RWPE1 (cell line): ENCODE measurements at regions of chr4 and their contacts with region 1.

Region 1: GRCh38 chr4:186021461-186022167 is 47.3 kb upstream of the TLR3 start:
- DNase-seq: peak; percentile 43
- H3K27ac ChIP-seq: no peak overlapping the region
- CTCF ChIP-seq: peak; percentile 87

Region 2: GRCh38 chr4:185640811-185641675 is 380.6 kb before region 1 on chr4:
- CTCF ChIA-PET with region 1: interaction called, 25 read pairs
- POLR2A ChIA-PET with region 1: no interaction called
- DNase-seq: peak; percentile 19
- H3K27ac ChIP-seq: no peak overlapping the region
- CTCF ChIP-seq: peak; percentile 42

Region 3: GRCh38 chr4:186037692-186038658 is 16.4 kb after region 1 on chr4:
- CTCF ChIA-PET with region 1: interaction called, 12 read pairs
- POLR2A ChIA-PET with region 1: no interaction called
- DNase-seq: peak; percentile 62
- H3K27ac ChIP-seq: no peak overlapping the region
- CTCF ChIP-seq: peak; percentile 67